Ascending aorta (tissue), 2 donors: ENCODE measurements at regions of chr7 and their contacts with region 1.

Region 1: DNA sequence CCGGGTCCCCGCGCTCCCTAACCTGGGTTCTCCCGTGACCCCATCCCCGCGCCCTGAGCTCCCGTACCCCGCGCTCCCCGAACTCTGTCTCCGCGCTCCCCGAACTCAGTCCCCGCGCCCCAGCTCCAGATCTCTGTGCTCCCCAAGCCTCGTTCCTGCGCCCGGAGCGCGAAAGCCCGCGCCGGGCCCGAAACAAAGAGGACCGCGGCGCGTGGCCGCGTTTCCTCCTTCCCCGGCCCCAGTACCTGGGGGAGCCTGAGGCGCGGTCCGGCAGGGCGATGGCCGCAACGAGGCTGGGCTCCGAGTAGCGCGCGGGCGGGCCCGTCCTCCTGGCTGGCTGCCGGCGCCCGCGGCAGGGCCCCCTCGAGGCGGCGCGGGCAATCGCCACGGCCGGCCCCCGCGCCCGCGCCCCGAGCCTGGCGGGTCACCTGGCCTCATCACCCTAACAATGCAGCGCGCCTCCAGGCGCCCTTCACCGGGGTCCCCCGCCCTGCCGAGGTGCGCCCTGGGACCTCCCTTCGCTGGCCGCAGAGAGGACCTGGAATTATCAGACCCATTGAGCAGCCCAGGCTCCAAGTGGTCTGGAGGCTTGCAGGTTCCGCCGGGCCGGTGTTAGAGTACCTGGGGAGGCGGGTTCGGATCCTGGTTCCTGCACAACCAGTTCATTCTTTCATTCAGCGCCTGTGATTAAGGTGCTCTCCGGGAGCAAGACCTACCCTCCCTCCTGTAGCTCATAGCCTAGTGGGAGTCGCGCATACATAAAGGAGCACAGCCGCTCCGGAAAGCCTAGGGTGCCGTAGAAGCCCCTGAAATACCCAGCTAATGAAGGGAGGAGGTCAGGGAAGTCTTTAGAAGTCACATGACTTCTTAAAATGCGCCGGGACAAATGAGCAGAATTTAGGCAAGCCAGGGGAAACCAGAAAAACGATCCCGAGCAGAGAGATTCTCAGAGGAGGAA is at the start of gene TNS3:
- DNase-seq: peak in 1 of 2 donors; percentile 73
- H3K4me3 ChIP-seq: peak within 1 kb of the TSS; percentile 75 to 82
- H3K27ac ChIP-seq: peak within 1 kb of the TSS; percentile 85 to 88
- H3K4me1 ChIP-seq: peaks cover 14 to 58% of the 10 kb centered on the region in 2 donors
- H3K27me3 ChIP-seq: no peaks in the 10 kb centered on the region
- CTCF ChIP-seq: peak in 1 of 3 experiments; percentile 60
- total RNA-seq, gene TNS3: 89.8 TPM

Region 2: GRCh38 chr7:46934198-46934825 is 647.8 kb before region 1 on chr7:
- intact Hi-C with region 1: no loop called
- DNase-seq: no peak
- H3K4me3 ChIP-seq: no peak overlapping the region
- H3K27ac ChIP-seq: no peak overlapping the region
- H3K4me1 ChIP-seq: peaks cover 0 to 6% of the 10 kb centered on the region in 2 donors
- H3K27me3 ChIP-seq: no peaks in the 10 kb centered on the region
- CTCF ChIP-seq: no peak

Region 3: DNA sequence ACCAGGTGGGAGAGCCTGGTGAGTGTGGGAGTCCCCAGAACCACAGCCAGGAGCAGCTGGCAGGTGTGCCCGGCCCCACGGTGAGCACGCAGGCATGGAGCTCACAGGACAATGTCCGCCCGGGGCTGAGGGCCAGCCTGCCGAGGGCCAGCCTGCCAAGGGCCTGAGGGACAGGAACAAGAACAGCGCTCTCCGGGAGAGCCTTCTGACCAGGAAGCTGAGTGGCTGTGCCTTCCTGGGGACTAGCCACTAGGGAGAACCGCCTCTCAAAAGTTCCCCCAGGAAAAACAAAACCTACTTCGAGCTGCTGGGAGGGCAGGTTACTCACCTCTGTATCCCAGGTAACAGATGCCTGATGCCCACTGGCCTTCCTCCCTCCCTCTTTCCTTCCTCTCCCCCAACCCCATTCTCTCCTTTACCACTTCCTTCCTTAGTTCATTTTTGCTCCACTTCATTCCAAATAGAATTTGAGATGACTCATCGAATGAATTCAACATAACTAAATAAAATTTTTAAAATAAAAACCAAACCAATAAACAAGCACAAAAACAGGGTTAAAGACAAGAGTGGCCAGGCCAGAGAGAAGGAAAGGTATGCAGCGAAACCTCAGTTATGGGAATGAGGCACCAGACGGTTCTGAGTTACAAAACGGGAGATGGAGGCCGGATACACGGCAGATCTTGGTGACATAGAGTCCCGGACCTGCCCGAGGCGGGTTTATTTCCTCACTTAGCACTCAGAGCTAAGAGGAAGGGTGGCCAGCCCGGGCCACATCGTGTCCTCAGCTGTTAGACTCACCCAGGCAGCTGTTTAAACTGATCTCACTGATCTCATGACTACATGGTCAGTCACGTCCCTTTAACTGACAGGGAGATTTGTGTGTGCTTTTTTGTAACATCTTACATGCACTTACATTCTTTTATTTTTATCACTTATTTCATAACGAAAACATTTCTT is 128.7 kb before region 1 on chr7:
- intact Hi-C with region 1: loop called (anchors 2 kb)
- DNase-seq: peak; percentile 80 to 92
- H3K4me3 ChIP-seq: peak overlapping the region; percentile 20 to 58
- H3K27ac ChIP-seq: peak overlapping the region; percentile 86 to 89
- H3K4me1 ChIP-seq: peaks cover 22 to 36% of the 10 kb centered on the region in 2 donors
- H3K27me3 ChIP-seq: no peaks in the 10 kb centered on the region
- CTCF ChIP-seq: no peak

Region 4: GRCh38 chr7:47536661-47537611 is 45.1 kb before region 1 on chr7:
- intact Hi-C with region 1: loop called (anchors 5 kb)
- DNase-seq: peak; percentile 25 to 75
- H3K4me3 ChIP-seq: peak overlapping the region; percentile 68 to 69
- H3K27ac ChIP-seq: peak overlapping the region; percentile 19 to 45
- H3K4me1 ChIP-seq: peaks cover 2 to 17% of the 10 kb centered on the region in 2 donors
- H3K27me3 ChIP-seq: no peaks in the 10 kb centered on the region
- CTCF ChIP-seq: no peak

Region 5: DNA sequence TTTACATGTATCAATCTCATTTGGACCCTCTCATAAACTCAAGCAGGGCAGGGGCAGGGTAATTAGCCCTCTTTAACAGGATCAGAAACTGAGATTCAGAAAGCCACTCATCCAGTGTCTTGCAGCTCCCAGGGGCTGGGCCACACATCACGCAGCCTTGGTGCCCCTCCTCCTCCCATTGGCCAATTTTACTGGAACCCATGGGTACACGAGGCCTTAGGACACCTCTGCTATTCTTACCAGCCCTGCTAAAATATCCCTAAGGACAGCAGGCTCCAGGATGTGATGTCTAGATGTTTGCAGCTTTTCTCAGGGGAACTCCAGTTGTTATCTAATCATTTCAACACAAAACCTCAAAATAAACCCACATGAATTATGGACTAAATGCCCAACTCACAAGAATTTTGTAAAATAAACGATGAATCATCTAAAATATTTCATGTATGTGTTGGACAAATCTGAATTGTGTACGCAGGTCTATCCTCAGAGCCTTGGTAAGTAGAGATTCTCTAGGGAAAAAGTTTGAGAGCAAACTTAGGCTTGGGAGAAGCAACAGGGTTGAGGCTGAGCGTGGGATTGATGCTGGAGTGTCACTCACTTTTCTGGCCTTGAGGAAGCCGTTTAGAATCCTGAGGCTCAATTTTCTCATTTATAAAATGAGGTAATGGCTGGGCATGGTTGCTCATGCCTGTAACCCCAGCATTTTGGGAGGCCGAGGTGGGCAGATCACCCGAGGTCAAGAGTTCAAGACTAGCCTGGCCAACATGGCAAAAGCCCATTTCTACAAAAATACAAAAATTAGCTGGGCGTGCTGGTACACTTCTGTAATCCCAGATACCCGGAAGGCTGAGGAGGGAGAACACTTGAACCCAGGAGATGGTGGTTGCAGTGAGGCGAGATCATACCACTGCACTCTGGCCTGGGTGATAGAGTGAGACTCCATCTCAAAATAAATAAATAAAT is 69.6 kb after region 1 on chr7:
- intact Hi-C with region 1: loop called (anchors 5 kb)
- DNase-seq: peak in 1 of 2 donors; percentile 81
- H3K4me3 ChIP-seq: no peak overlapping the region
- H3K27ac ChIP-seq: peak overlapping the region; percentile 48 to 76
- H3K4me1 ChIP-seq: peaks cover 9 to 25% of the 10 kb centered on the region in 2 donors
- H3K27me3 ChIP-seq: no peaks in the 10 kb centered on the region
- CTCF ChIP-seq: no peak

Region 6: GRCh38 chr7:47757921-47758411 is 175.9 kb after region 1 on chr7:
- intact Hi-C with region 1: loop called (anchors 5 kb)
- DNase-seq: peak; percentile 63 to 93
- H3K4me3 ChIP-seq: no peak overlapping the region
- H3K27ac ChIP-seq: peak overlapping the region; percentile 70 to 86
- H3K4me1 ChIP-seq: peaks cover 0 to 12% of the 10 kb centered on the region in 2 donors
- H3K27me3 ChIP-seq: no peaks in the 10 kb centered on the region
- CTCF ChIP-seq: no peak

Region 7: GRCh38 chr7:47786557-47787248 is 204.6 kb after region 1 on chr7:
- intact Hi-C with region 1: loop called (anchors 5 kb)
- DNase-seq: peak; percentile 15 to 88
- H3K4me3 ChIP-seq: no peak overlapping the region
- H3K27ac ChIP-seq: peak overlapping the region; percentile 86 to 91
- H3K4me1 ChIP-seq: peaks cover 13 to 49% of the 10 kb centered on the region in 2 donors
- H3K27me3 ChIP-seq: no peaks in the 10 kb centered on the region
- CTCF ChIP-seq: no peak

Region 8: GRCh38 chr7:47885309-47885986 is 303.4 kb after region 1 on chr7:
- intact Hi-C with region 1: no loop called
- DNase-seq: peak in 1 of 2 donors; percentile 18
- H3K4me3 ChIP-seq: no peak overlapping the region
- H3K27ac ChIP-seq: no peak overlapping the region
- H3K4me1 ChIP-seq: no peaks in the 10 kb centered on the region
- H3K27me3 ChIP-seq: no peaks in the 10 kb centered on the region
- CTCF ChIP-seq: no peak

Region 9: DNA sequence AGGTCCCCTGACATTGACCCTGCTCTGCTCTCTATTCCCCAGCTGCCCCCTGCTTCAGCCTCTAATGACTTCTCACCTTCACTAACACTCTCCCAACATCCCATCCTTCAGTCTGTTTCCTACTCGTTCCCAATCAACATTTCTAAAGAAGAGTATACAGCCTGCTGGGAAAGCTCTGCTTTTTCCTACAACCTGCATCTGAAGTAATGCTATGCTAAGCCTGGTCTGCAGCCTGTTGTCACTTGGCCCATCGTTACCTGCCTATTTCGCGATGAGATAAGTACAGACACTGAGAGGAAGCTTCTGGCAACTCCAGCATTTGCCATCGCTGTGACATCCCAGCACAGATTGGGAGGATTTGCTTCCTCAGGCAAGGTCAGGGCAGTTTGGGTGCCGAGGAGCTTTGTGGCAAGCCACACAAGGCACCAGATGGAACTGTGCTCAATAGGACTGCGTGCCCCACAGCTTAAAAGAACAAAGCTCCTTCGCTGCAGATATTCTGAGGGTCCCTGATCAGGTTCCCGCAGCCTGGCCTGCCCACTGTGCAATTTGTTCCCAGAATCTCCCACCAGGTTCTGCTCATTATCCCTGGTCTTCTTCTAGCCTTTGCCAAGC is 314.8 kb after region 1 on chr7:
- intact Hi-C with region 1: no loop called
- DNase-seq: no peak
- H3K4me3 ChIP-seq: no peak overlapping the region
- H3K27ac ChIP-seq: no peak overlapping the region
- H3K4me1 ChIP-seq: no peaks in the 10 kb centered on the region
- H3K27me3 ChIP-seq: no peaks in the 10 kb centered on the region
- CTCF ChIP-seq: no peak

Region 10: GRCh38 chr7:47931005-47932004 is 349.2 kb after region 1 on chr7:
- intact Hi-C with region 1: no loop called
- DNase-seq: no peak
- H3K4me3 ChIP-seq: no peak overlapping the region
- H3K27ac ChIP-seq: peak overlapping the region in 1 of 2 donors; percentile 25
- H3K4me1 ChIP-seq: peaks cover 0 to 6% of the 10 kb centered on the region in 2 donors
- H3K27me3 ChIP-seq: no peaks in the 10 kb centered on the region
- CTCF ChIP-seq: no peak